ENCODE measurements at regions of chrX and their contacts with region 1.

Region 1: DNA sequence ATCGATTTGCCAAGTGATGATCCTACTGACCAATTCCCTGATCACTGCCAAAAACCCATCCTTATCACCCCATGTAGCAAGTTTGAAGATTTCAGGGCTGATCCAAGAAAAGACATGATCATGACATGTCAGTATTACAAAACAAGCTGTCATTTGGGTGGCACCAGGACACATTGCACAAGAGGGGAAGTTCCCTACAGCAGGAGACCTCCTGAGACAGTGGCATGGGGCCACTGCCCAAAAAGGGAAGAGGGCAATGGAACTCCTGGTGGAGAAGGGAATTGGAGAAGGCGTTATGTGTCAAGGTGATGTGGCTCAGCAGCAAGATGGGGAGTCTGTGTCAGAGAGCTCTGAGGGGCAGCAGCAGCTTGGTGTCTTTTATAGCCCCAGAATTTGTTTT is 43.4 kb downstream of the ZNF182 start:
- DNase-seq: no peak
- H3K4me3 ChIP-seq: no peak overlapping the region
- H3K4me3 Mint-ChIP-seq: no peak overlapping the region
- H3K27ac Mint-ChIP-seq: no peak overlapping the region
- H3K4me1 ChIP-seq: no peaks in the 10 kb centered on the region
- H3K4me1 Mint-ChIP-seq: peaks cover 5% of the 10 kb centered on the region
- H3K27me3 ChIP-seq: no peaks in the 10 kb centered on the region
- H3K27me3 Mint-ChIP-seq: no peaks in the 10 kb centered on the region
- CTCF ChIP-seq: no peak

Region 2: GRCh38 chrX:48021026-48021900 is 60.9 kb after region 1 on chrX:
- CTCF ChIA-PET with region 1: no interaction called
- POLR2A ChIA-PET with region 1: no interaction called
- intact Hi-C with region 1: loop called (anchors 10 kb)
- DNase-seq: peak; percentile 80 to 81
- H3K4me3 ChIP-seq: peak overlapping the region; percentile 63
- H3K4me3 Mint-ChIP-seq: peak overlapping the region; percentile 82
- H3K27ac Mint-ChIP-seq: peak overlapping the region; percentile 98
- H3K4me1 ChIP-seq: no peaks in the 10 kb centered on the region
- H3K4me1 Mint-ChIP-seq: peaks cover 6% of the 10 kb centered on the region
- H3K27me3 ChIP-seq: no peaks in the 10 kb centered on the region
- H3K27me3 Mint-ChIP-seq: no peaks in the 10 kb centered on the region
- CTCF ChIP-seq: no peak

Measured in Caco-2 (cell line).